ENCODE measurements at regions of chr17 and their contacts with region 1.

Region 1: GRCh38 chr17:42920922-42921321 is 20.3 kb downstream of the G6PC1 start:
- DNase-seq: peak; percentile 18
- ATAC-seq: peak; percentile 45
- H3K4me3 ChIP-seq: no peak overlapping the region
- H3K27ac ChIP-seq: peak overlapping the region; percentile 53
- H3K4me1 ChIP-seq: peaks cover 68% of the 10 kb centered on the region
- H3K27me3 ChIP-seq: no peaks in the 10 kb centered on the region
- CTCF ChIP-seq: no peak
- EP300 ChIP-seq: peak in 1 of 2 experiments; percentile 31; a peak in 1 of 4 replicates
- POLR2A ChIP-seq: no peak
- RAD21 ChIP-seq: no peak

Region 2: DNA sequence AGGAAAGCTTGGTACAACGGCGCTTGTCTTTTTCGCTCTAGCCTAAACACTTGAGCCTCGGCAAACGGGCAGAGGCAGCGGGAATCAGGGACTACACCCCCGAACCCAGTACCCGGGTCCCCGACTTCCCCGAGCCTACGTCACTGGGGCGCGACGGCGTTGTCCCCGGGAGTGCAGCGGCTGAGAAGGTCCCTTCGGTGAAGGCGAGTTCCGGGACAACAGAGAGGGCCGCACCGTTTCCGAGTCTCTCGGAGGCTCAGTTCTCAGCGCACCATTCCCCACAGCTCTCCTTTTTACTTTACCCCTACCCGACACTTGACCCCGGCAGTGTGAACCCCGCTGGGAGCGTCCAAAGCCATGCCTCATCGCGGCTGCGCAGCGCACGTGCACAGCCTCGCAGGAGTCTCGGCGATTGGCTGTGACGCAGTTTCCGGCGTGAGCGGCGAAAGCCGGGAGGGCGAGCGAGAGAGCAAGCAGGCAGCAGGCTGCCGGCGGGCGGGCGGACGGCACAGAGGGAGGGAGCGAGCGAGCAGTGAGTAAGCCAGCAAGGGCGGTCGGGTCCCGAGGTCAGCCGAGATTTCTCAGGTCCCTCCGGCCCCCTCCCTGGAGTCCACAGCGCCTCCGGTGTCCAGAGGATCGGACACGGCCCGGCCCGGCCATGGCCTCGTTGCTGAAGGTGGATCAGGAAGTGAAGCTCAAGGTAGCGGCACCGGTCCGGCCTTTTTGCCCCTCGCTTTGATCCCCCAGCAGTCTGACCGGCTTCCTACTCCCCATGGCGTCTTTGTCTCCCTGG is 87.8 kb before region 1 on chr17 and contains the start of gene PSME3:
- CTCF ChIA-PET with region 1: no interaction called
- POLR2A ChIA-PET with region 1: interaction called, 17 read pairs
- in situ Hi-C with region 1: no loop called
- intact Hi-C with region 1: no loop called
- DNase-seq: peak; percentile 88
- ATAC-seq: peak; percentile 95
- H3K4me3 ChIP-seq: peak within 1 kb of the TSS; percentile 92 to 98 (median 92)
- H3K27ac ChIP-seq: peak within 1 kb of the TSS; percentile 90
- H3K4me1 ChIP-seq: peaks cover 40% of the 10 kb centered on the region
- H3K27me3 ChIP-seq: no peaks in the 10 kb centered on the region; a peak in 1 of 5 replicates
- CTCF ChIP-seq: peak; percentile 37
- EP300 ChIP-seq: peak in 1 of 2 experiments; percentile 26; a peak in 2 of 4 replicates
- POLR2A ChIP-seq: peak; percentile 93 to 97
- RAD21 ChIP-seq: peak; percentile 30; the same call in 1 of the 2 replicates
- total RNA-seq, gene PSME3: 135 and 202 TPM in 2 replicates

Region 3: DNA sequence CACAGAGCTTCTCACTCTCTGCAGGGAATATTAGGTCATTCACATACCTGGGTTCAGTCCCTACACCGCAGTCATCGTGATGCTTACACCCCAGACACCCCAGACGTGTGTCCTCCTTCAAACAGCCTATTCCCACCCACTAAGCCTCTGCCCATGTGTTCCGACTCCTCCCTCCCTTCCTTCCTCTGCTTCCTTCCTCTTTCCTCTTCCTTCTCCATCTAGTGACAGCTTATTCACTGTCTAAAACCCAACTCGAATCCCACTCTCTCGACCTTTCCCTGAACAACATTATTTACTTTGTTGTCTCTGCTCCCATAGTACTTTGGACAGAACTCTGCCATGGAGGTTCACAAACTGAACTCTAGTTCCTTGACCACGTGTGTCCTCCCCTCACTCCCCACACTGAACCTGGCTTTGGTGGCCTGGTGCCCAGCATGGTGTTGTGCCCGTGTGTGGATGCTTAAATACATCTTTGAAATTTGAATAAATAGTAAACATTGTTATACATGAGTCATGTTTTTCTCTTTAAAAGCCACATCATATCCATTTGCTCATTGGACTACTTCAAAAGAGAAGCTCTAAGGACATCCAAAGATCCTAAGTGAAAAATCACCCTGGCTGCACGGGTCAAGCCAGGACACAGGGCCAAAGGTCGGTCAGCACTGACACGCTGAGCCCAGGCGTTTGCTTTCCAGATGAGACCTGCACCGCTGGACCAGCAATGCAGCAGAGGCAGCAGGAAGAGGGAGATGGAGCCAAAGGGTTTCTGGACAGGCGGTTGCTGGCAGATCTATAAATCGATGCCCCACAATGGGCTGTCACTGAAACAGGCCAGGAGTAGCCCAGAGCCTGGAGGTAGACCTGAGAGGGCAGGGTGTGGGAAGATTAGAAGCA is 34.4 kb before region 1 on chr17:
- CTCF ChIA-PET with region 1: no interaction called
- POLR2A ChIA-PET with region 1: interaction called, 9 read pairs
- in situ Hi-C with region 1: no loop called
- intact Hi-C with region 1: loop called (anchors 1 kb)
- DNase-seq: peak; percentile 72
- ATAC-seq: peak; percentile 78
- H3K4me3 ChIP-seq: peak overlapping the region in 1 of 3 experiments; percentile 49; a peak in 2 of 6 replicates
- H3K27ac ChIP-seq: peak overlapping the region; percentile 65
- H3K4me1 ChIP-seq: peaks cover 96% of the 10 kb centered on the region
- H3K27me3 ChIP-seq: no peaks in the 10 kb centered on the region
- CTCF ChIP-seq: peak; percentile 45
- EP300 ChIP-seq: no peak; a peak in 1 of 4 replicates
- POLR2A ChIP-seq: no peak; a peak in 2 of 4 replicates
- RAD21 ChIP-seq: peak; percentile 67; the same call in 1 of the 2 replicates

Region 4: GRCh38 chr17:42895185-42895555 is 25.8 kb before region 1 on chr17:
- CTCF ChIA-PET with region 1: no interaction called
- POLR2A ChIA-PET with region 1: interaction called, 32 read pairs
- in situ Hi-C with region 1: no loop called
- intact Hi-C with region 1: no loop called
- DNase-seq: no peak
- ATAC-seq: no peak
- H3K4me3 ChIP-seq: peak overlapping the region; percentile 9 to 57 (median 22); a peak in 4 of 6 replicates
- H3K27ac ChIP-seq: peak overlapping the region; percentile 85
- H3K4me1 ChIP-seq: peaks cover 95% of the 10 kb centered on the region
- H3K27me3 ChIP-seq: no peaks in the 10 kb centered on the region
- CTCF ChIP-seq: no peak
- EP300 ChIP-seq: no peak
- POLR2A ChIP-seq: no peak
- RAD21 ChIP-seq: no peak

Region 5: GRCh38 chr17:42908872-42909700 is 11.8 kb before region 1 on chr17:
- CTCF ChIA-PET with region 1: no interaction called
- POLR2A ChIA-PET with region 1: interaction called, 13 read pairs
- in situ Hi-C with region 1: no loop called
- intact Hi-C with region 1: no loop called
- DNase-seq: no peak
- ATAC-seq: no peak
- H3K4me3 ChIP-seq: no peak overlapping the region
- H3K27ac ChIP-seq: peak overlapping the region; percentile 3
- H3K4me1 ChIP-seq: peaks cover 42% of the 10 kb centered on the region
- H3K27me3 ChIP-seq: no peaks in the 10 kb centered on the region; a peak in 1 of 5 replicates
- CTCF ChIP-seq: no peak
- EP300 ChIP-seq: no peak
- POLR2A ChIP-seq: no peak
- RAD21 ChIP-seq: no peak

Region 6: GRCh38 chr17:43006639-43007551 is 86.0 kb after region 1 on chr17 and contains the start of gene IFI35:
- CTCF ChIA-PET with region 1: no interaction called
- POLR2A ChIA-PET with region 1: no interaction called
- in situ Hi-C with region 1: no loop called
- intact Hi-C with region 1: no loop called
- DNase-seq: peak; percentile 83
- ATAC-seq: peak; percentile 78
- H3K4me3 ChIP-seq: peak within 1 kb of the TSS; percentile 71 to 92 (median 88)
- H3K27ac ChIP-seq: peak within 1 kb of the TSS; percentile 92
- H3K4me1 ChIP-seq: peaks cover 81% of the 10 kb centered on the region
- H3K27me3 ChIP-seq: no peaks in the 10 kb centered on the region; a peak in 1 of 5 replicates
- CTCF ChIP-seq: peak; percentile 97
- EP300 ChIP-seq: no peak
- POLR2A ChIP-seq: peak; percentile 75 to 76
- RAD21 ChIP-seq: peak; percentile 88
- total RNA-seq, gene IFI35: 38.1 and 40.2 TPM in 2 replicates